CD4-positive, alpha-beta T cell (primary cell): ENCODE measurements at regions of chr15 and their contacts with region 1.

Region 1: GRCh38 chr15:56040081-56041035 is 46.9 kb upstream of the NEDD4 start:
- DNase-seq: peak in 2 of 14 experiments; percentile 45 to 60
- ATAC-seq: no peak
- H3K4me3 ChIP-seq: no peak overlapping the region
- H3K4me3 Mint-ChIP-seq: no peak overlapping the region
- H3K27ac ChIP-seq: no peak overlapping the region
- H3K27ac Mint-ChIP-seq: peak overlapping the region; percentile 12
- H3K4me1 ChIP-seq: peaks cover 22% of the 10 kb centered on the region
- H3K4me1 Mint-ChIP-seq: peaks cover 50% of the 10 kb centered on the region
- H3K27me3 ChIP-seq: no peaks in the 10 kb centered on the region
- H3K27me3 Mint-ChIP-seq: no peaks in the 10 kb centered on the region
- CTCF ChIP-seq: no peak

Region 2: GRCh38 chr15:55993111-55993803 is 47.1 kb before region 1 on chr15 and contains the start of gene NEDD4:
- CTCF ChIA-PET with region 1: no interaction called
- POLR2A ChIA-PET with region 1: no interaction called
- intact Hi-C with region 1: loop called (anchors 2 to 5 kb)
- DNase-seq: peak; percentile 37 to 89 (median 62)
- ATAC-seq: peak; percentile 90
- H3K4me3 ChIP-seq: peak within 1 kb of the TSS; percentile 86
- H3K4me3 Mint-ChIP-seq: peak within 1 kb of the TSS; percentile 96
- H3K27ac ChIP-seq: no peak within 1 kb of the TSS
- H3K27ac Mint-ChIP-seq: peak within 1 kb of the TSS; percentile 21
- H3K4me1 ChIP-seq: peaks cover 9% of the 10 kb centered on the region
- H3K4me1 Mint-ChIP-seq: peaks cover 22% of the 10 kb centered on the region
- H3K27me3 ChIP-seq: peaks cover 0 to 5% of the 10 kb centered on the region in 2 experiments
- H3K27me3 Mint-ChIP-seq: peaks cover 3% of the 10 kb centered on the region
- CTCF ChIP-seq: peak; percentile 17
- total RNA-seq, gene NEDD4: 2.6 to 2.7 TPM